ENCODE measurements at regions of chr9 and their contacts with region 1.

Region 1: DNA sequence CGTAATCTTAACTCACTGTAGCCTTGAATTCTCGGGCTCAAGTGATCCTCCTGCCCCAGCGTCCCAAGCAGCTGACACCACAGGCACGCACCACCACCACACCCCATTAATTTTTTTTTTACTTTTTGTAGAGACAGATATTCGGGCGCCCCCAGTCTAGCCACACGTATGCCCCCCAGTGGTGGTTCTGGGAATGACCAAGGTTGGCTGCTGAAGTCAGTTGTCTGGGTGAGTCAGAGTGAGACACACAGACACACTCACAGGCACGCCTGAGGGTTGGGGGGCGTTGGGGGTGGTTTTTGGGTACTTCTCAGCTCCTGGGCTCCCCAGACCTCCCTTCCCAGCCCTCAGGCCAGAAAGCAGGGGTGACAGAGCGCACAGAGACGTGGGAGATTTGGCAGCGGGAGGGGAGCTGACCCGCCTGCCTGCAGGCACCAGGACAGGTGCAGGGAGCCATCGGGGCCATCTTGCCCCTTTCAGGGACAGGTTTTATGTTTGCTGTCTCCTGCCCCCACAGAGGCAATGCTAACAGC is 4.2 kb upstream of the ENTPD8 start:
- H3K4me3 ChIP-seq: no peak overlapping the region
- H3K27ac ChIP-seq: no peak overlapping the region
- H3K4me1 ChIP-seq: no peaks in the 10 kb centered on the region
- CTCF ChIP-seq: peak; percentile 85

Region 2: DNA sequence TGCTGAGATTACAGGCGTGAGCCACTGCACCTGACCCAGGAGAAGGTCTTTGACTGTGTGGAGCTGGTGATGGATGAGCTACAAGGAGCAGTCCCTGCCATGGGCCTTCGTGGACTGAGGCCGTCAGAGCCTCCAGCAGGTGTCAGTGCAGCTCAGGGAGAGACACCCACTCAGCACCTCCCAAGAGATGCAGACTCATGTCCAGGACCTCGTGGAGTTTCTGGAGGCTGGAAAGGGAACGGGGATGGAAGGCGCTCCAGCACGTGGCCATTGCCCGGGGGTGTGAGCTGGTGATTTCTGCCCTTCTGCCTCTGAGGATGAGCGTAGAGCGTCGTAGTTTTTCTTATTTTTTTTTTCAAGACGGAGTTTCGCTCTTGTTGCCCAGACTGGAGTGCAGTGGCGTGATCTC is 158.4 kb before region 1 on chr9:
- CTCF ChIA-PET with region 1: interaction called, 28 read pairs
- POLR2A ChIA-PET with region 1: interaction called, 3 read pairs
- H3K4me3 ChIP-seq: no peak overlapping the region
- H3K27ac ChIP-seq: no peak overlapping the region
- H3K4me1 ChIP-seq: no peaks in the 10 kb centered on the region
- CTCF ChIP-seq: peak; percentile 92

Region 3: GRCh38 chr9:137423004-137423874 is 22.1 kb before region 1 on chr9 and contains the starts of genes EXD3 and NOXA1:
- CTCF ChIA-PET with region 1: interaction called, 35 read pairs
- POLR2A ChIA-PET with region 1: interaction called, 16 read pairs
- H3K4me3 ChIP-seq: peak within 1 kb of the TSS; percentile 85
- H3K27ac ChIP-seq: peak within 1 kb of the TSS; percentile 86
- H3K4me1 ChIP-seq: peaks cover 9% of the 10 kb centered on the region
- CTCF ChIP-seq: peak; percentile 47; the same call in 1 of the 2 replicates

Region 4: DNA sequence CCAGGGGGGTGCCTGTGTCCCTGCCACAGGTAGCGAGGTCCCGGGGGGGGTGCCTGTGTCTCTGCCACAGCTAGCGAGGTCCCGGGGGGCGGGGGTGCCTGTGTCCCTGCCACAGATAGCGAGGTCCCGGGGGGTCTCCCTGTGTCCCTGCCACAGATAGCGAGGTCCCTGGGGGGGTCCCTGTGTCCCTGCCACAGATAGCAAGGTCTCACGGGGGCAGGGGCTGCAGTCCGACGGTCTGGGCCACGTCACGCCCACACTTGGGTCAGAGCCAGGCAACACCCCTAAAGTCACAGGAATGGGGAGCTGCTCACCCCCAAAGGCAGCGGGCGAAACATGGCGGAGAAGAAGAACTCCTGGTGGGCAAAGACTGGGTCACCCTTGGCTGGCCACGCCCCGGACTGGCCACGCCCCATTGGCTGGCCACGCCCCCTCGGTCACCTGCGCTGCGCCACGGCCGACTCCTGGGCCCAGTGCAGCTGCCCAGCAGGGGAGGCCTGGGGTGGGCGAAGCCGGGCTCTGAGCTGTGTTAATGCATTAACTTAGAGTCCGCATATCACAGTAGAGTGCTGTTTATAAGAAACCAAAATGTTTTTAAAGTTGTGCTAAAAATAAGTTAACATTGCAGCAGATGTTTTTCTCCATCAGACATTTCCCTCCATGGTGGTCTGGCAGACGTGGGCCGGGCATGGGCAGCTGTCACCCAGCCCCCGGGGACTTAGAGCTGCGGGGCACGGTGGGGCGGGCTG is 15.2 kb before region 1 on chr9:
- CTCF ChIA-PET with region 1: interaction called, 35 read pairs
- POLR2A ChIA-PET with region 1: interaction called, 3 read pairs
- H3K4me3 ChIP-seq: no peak overlapping the region
- H3K27ac ChIP-seq: no peak overlapping the region
- H3K4me1 ChIP-seq: no peaks in the 10 kb centered on the region
- CTCF ChIP-seq: no peak

Region 5: GRCh38 chr9:137459147-137459600 is 13.8 kb after region 1 on chr9 and contains the start of gene NSMF:
- CTCF ChIA-PET with region 1: interaction called, 14 read pairs
- POLR2A ChIA-PET with region 1: interaction called, 10 read pairs
- H3K4me3 ChIP-seq: peak within 1 kb of the TSS; percentile 61
- H3K27ac ChIP-seq: peak within 1 kb of the TSS; percentile 71; the same call in 1 of the 2 replicates
- H3K4me1 ChIP-seq: peaks cover 6% of the 10 kb centered on the region
- CTCF ChIP-seq: no peak

Measured in HEK293 (cell line).